Posterior vena cava (tissue), 2 donors: ENCODE measurements at regions of chr19 and their contacts with region 1.

Region 1: GRCh38 chr19:46984077-46985010 is 35.3 kb upstream of the NPAS1 start:
- DNase-seq: no peak

Region 2: GRCh38 chr19:46944918-46945628 is 39.3 kb before region 1 on chr19:
- intact Hi-C with region 1: loop called in 1 of 2 experiments (anchors 5 kb)
- DNase-seq: peak; percentile 84

Region 3: GRCh38 chr19:47045867-47046470 is 61.6 kb after region 1 on chr19:
- intact Hi-C with region 1: no loop called
- DNase-seq: no peak